Pancreas (tissue), 10 donors: ENCODE measurements at regions of chr7 and their contacts with region 1.

Region 1: DNA sequence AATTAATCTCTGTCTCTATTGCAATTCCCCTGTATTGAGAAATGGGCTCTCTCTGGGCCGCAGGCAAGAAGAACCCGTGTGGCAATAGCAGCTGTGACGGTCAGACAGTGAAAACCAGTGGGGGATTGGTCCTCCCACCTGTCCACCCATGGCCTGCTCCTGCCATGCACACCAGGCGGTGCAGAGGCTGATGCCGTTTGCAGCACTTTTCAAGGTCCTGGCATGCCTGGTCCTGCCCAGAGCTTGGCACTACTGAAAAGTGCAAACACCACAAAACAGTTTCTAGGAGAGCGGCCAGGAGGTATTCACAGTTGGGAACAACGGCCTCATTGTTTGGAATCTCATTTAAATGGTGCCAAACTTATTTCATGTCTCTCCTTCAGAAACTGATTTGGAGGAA is 41.5 kb downstream of the PSPH start:
- DNase-seq: peak; percentile 68 to 82 (median 77)
- ATAC-seq: peak; percentile 96 to 98 (median 96)
- H3K4me3 ChIP-seq: no peak overlapping the region
- H3K27ac ChIP-seq: peak overlapping the region in 3 of 4 donors; percentile 38 to 59 (median 46)
- H3K4me1 ChIP-seq: peaks cover 0 to 10% (median 7%) of the 10 kb centered on the region in 3 donors
- H3K27me3 ChIP-seq: no peaks in the 10 kb centered on the region
- CTCF ChIP-seq: no peak

Region 2: DNA sequence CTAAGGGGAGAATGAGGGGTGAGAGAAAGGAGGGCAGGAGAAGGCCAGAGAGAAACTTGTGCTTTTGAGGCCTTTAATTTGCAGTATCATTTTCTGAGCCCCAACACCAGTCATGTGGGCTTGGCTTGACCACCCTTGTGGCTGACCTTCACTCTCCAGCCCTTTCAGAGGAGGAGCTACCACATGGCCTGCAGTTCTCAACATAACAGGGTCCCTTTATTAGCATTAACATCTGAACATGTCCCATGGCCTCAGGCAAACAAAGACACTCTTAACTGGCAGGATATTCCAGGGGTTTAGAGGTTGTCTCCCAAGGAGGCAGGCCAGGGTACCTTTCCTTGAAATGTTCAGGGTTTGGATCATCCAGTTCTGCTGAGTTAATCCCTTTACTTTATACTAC is 115.8 kb before region 1 on chr7:
- intact Hi-C with region 1: no loop called
- DNase-seq: no peak
- ATAC-seq: no peak
- H3K4me3 ChIP-seq: no peak overlapping the region
- H3K27ac ChIP-seq: no peak overlapping the region
- H3K4me1 ChIP-seq: no peaks in the 10 kb centered on the region
- H3K27me3 ChIP-seq: no peaks in the 10 kb centered on the region
- CTCF ChIP-seq: no peak

Region 3: GRCh38 chr7:55964261-55965099 is 45.2 kb before region 1 on chr7 and contains the start of gene NIPSNAP2:
- intact Hi-C with region 1: loop called in 1 of 3 experiments (anchors 5 kb)
- DNase-seq: peak; percentile 82 to 93 (median 89)
- ATAC-seq: peak; percentile 89 to 95 (median 92)
- H3K4me3 ChIP-seq: peak within 1 kb of the TSS; percentile 16 to 63 (median 50)
- H3K27ac ChIP-seq: peak within 1 kb of the TSS; percentile 66 to 90 (median 86)
- H3K4me1 ChIP-seq: peaks cover 3 to 24% (median 12%) of the 10 kb centered on the region in 3 donors
- H3K27me3 ChIP-seq: no peaks in the 10 kb centered on the region
- CTCF ChIP-seq: peak; percentile 8 to 38 (median 20)
- total RNA-seq, gene NIPSNAP2: 18.7 to 31.1 (median 25.8) TPM

Region 4: GRCh38 chr7:56053379-56053778 is 43.7 kb after region 1 on chr7:
- intact Hi-C with region 1: no loop called
- DNase-seq: peak in 1 of 6 donors; percentile 3
- ATAC-seq: no peak
- H3K4me3 ChIP-seq: no peak overlapping the region
- H3K27ac ChIP-seq: no peak overlapping the region
- H3K4me1 ChIP-seq: peaks cover 7 to 27% (median 9%) of the 10 kb centered on the region in 3 donors
- H3K27me3 ChIP-seq: no peaks in the 10 kb centered on the region
- CTCF ChIP-seq: no peak

Region 5: DNA sequence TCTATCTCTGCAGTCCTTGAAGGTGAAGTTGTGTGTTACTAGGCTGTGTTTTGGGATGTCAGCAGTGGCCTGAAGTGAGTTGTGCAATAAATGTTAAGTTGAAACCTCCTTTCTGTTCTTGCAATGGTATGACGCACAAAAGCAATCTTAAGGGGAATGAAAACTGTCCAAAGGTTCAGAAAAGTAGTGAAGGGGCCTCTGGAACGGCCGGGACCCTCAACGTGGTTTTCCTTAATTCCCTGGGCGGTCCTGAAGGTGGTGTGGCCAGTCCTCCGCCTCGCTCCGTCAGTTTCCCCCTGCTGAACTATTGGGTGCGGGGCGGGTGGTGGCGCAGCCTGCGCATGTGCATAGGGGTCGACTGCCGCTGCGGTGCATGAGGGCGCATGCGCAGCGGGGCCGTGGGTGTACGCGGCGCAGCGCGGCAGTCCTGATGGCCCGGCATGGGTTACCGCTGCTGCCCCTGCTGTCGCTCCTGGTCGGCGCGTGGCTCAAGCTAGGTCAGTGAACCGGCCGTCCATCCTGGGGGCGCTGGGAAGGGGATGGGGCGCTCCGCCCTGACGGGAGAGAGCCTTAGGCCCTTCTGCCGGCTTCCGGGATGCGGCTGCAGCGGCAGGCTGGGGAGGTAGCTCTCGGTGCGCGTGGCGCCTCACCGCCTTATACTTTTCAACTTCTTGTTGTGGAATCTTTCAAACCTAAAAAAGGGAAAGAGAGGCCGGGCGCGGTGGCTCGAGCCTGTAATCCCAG is 54.4 kb after region 1 on chr7 and contains the start of gene SUMF2:
- intact Hi-C with region 1: no loop called
- DNase-seq: peak; percentile 84 to 96 (median 88)
- ATAC-seq: peak; percentile 93 to 98 (median 96)
- H3K4me3 ChIP-seq: peak within 1 kb of the TSS; percentile 49 to 78 (median 66)
- H3K27ac ChIP-seq: peak within 1 kb of the TSS; percentile 67 to 92 (median 85)
- H3K4me1 ChIP-seq: peaks cover 8 to 35% (median 15%) of the 10 kb centered on the region in 3 donors
- H3K27me3 ChIP-seq: no peaks in the 10 kb centered on the region
- CTCF ChIP-seq: no peak
- total RNA-seq, gene SUMF2: 95.0 to 136 (median 108) TPM

Region 6: DNA sequence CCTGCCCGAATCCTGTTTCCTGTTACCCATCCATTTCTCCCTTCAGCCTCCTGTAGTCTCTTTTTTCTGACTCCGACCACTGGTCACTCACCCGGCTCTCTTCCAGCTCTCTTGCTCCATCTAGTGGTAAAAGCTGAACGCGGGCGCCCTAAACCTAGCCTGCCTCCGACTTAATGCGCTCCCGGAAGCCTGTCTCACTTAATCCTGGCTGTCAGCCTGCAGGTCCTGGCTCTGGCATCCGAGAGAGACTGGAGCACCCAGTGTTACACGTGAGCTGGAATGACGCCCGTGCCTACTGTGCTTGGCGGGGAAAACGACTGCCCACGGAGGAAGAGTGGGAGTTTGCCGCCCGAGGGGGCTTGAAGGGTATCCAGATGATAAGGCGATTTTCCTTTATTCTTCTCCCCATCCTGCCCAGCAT is 64.7 kb after region 1 on chr7:
- intact Hi-C with region 1: loop called in 2 of 3 experiments (anchors 2 to 10 kb)
- DNase-seq: peak; percentile 90 to 97 (median 94)
- ATAC-seq: peak; percentile 97 to 99 (median 98)
- H3K4me3 ChIP-seq: no peak overlapping the region
- H3K27ac ChIP-seq: peak overlapping the region in 3 of 4 donors; percentile 33 to 67 (median 50)
- H3K4me1 ChIP-seq: peaks cover 3 to 5% (median 4%) of the 10 kb centered on the region in 3 donors
- H3K27me3 ChIP-seq: no peaks in the 10 kb centered on the region
- CTCF ChIP-seq: peak; percentile 83 to 96 (median 90)